ENCODE measurements at regions of chr3 and their contacts with region 1.

Region 1: DNA sequence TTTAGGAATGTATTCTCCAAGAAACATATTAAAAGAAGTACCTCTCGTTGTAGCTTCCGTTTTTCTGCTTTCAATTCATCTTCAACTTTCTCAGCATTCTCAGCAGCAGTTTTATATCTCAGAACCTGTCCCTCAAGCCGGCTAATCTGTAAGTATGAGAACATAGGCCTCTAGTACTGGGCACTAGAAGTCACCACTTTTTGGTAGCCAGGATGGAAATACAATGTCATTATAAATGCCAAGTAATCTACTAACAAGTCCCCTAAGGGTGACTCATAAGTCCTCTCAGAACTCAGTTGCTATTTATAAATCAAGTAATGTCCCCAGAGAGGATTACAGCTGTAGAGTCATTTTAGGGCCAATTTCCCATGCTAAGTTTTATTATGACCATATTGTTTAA is 61.1 kb downstream of the MLH1 start:
- DNase-seq: peak; percentile 32
- ATAC-seq: peak; percentile 93
- H3K4me3 ChIP-seq: no peak overlapping the region
- H3K27ac ChIP-seq: peak overlapping the region; percentile 38; the same call in 1 of the 2 replicates
- H3K4me1 ChIP-seq: no peaks in the 10 kb centered on the region
- H3K27me3 ChIP-seq: no peaks in the 10 kb centered on the region
- CTCF ChIP-seq: no peak
- EP300 ChIP-seq: peak in 1 of 2 experiments; percentile 63; a peak in 1 of 4 replicates
- POLR2A ChIP-seq: no peak
- RAD21 ChIP-seq: no peak

Region 2: GRCh38 chr3:36843065-36844051 is 211.0 kb before region 1 on chr3:
- CTCF ChIA-PET with region 1: no interaction called
- POLR2A ChIA-PET with region 1: no interaction called
- RAD21 ChIA-PET with region 1: no interaction called
- SMC1A ChIA-PET with region 1: no interaction called
- in situ Hi-C with region 1: no loop called
- intact Hi-C with region 1: no loop called
- DNase-seq: peak; percentile 15
- ATAC-seq: peak; percentile 89
- H3K4me3 ChIP-seq: no peak overlapping the region
- H3K27ac ChIP-seq: no peak overlapping the region
- H3K4me1 ChIP-seq: peaks cover 3% of the 10 kb centered on the region
- H3K27me3 ChIP-seq: no peaks in the 10 kb centered on the region
- CTCF ChIP-seq: peak; percentile 47 to 77 (median 59); a peak in 5 of 6 replicates
- EP300 ChIP-seq: no peak
- POLR2A ChIP-seq: no peak
- RAD21 ChIP-seq: 0 out of 2 replicates have a peak, but pooled peaks have one; percentile 18

Region 3: DNA sequence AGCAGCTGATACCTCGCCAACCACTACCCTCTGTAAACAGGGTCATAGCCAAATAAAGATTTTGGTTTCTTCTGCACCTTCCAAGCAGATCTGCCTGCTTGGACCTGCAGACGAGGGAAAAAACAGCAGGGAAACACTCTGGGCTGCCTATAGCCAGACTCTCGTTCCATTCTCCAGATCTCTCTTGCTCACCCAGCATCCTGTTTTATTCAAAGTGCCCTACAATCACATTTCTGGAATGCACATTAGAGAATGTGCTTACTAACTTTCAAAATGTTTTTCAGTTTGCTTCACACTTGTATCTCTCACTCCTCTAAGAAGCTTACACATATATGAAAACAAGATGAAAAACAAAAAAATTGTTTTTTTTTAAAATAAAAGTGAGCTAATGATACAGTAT is 10.4 kb after region 1 on chr3:
- CTCF ChIA-PET with region 1: interaction called, 4 read pairs
- POLR2A ChIA-PET with region 1: interaction called, 5 read pairs
- RAD21 ChIA-PET with region 1: interaction called, 4 read pairs
- SMC1A ChIA-PET with region 1: interaction called, 14 read pairs
- in situ Hi-C with region 1: no loop called
- intact Hi-C with region 1: no loop called
- DNase-seq: no peak
- ATAC-seq: no peak
- H3K4me3 ChIP-seq: no peak overlapping the region
- H3K27ac ChIP-seq: no peak overlapping the region
- H3K4me1 ChIP-seq: no peaks in the 10 kb centered on the region
- H3K27me3 ChIP-seq: no peaks in the 10 kb centered on the region
- CTCF ChIP-seq: no peak
- EP300 ChIP-seq: no peak
- POLR2A ChIP-seq: no peak
- RAD21 ChIP-seq: no peak

Region 4: DNA sequence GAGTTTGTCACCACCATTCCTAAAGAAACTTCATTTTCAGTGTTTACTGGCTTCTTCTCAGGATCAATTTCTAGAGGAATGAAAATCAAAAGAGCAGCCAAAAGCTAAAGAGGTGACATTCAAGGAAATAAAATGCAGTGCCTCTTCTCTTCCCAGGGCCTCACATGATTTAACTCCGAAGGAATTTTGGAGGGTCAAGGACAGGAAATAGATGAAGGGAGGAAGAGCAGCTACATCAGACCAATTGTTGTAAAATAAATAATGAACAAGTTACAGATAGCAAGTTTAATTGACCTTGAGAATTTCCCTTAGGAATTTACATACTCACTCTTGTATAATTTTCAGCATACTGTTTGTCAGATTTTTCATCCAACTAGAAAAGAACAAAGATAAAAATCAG is 41.9 kb after region 1 on chr3:
- CTCF ChIA-PET with region 1: no interaction called
- POLR2A ChIA-PET with region 1: no interaction called
- RAD21 ChIA-PET with region 1: no interaction called
- SMC1A ChIA-PET with region 1: no interaction called
- in situ Hi-C with region 1: no loop called
- intact Hi-C with region 1: no loop called
- DNase-seq: no peak
- ATAC-seq: no peak
- H3K4me3 ChIP-seq: no peak overlapping the region
- H3K27ac ChIP-seq: no peak overlapping the region
- H3K4me1 ChIP-seq: no peaks in the 10 kb centered on the region
- H3K27me3 ChIP-seq: no peaks in the 10 kb centered on the region
- CTCF ChIP-seq: no peak
- EP300 ChIP-seq: no peak
- POLR2A ChIP-seq: no peak
- RAD21 ChIP-seq: no peak